PC-9 (cell line): ENCODE measurements at regions of chr1 and their contacts with region 1.

Region 1: GRCh38 chr1:42165511-42166163 is 1.1 kb upstream of the GUCA2A start:
- DNase-seq: peak; percentile 97 to 100
- H3K4me3 ChIP-seq: no peak overlapping the region
- H3K27ac ChIP-seq: peak overlapping the region; percentile 70
- H3K4me1 ChIP-seq: peaks cover 59% of the 10 kb centered on the region
- H3K27me3 ChIP-seq: no peaks in the 10 kb centered on the region
- CTCF ChIP-seq: no peak

Region 2: GRCh38 chr1:41423511-41424221 is 742.0 kb before region 1 on chr1:
- CTCF ChIA-PET with region 1: no interaction called
- POLR2A ChIA-PET with region 1: interaction called, 13 read pairs
- intact Hi-C with region 1: no loop called
- DNase-seq: peak; percentile 45 to 70
- H3K4me3 ChIP-seq: peak overlapping the region; percentile 43; the same call in 1 of the 2 replicates
- H3K27ac ChIP-seq: no peak overlapping the region
- H3K4me1 ChIP-seq: peaks cover 24% of the 10 kb centered on the region
- H3K27me3 ChIP-seq: no peaks in the 10 kb centered on the region
- CTCF ChIP-seq: peak; percentile 55; the same call in 1 of the 2 replicates

Region 3: GRCh38 chr1:41626616-41627375 is 538.8 kb before region 1 on chr1:
- CTCF ChIA-PET with region 1: no interaction called
- POLR2A ChIA-PET with region 1: interaction called, 45 read pairs
- intact Hi-C with region 1: no loop called
- DNase-seq: peak; percentile 89 to 90
- H3K4me3 ChIP-seq: no peak overlapping the region
- H3K27ac ChIP-seq: no peak overlapping the region
- H3K4me1 ChIP-seq: peaks cover 26% of the 10 kb centered on the region
- H3K27me3 ChIP-seq: no peaks in the 10 kb centered on the region
- CTCF ChIP-seq: no peak

Region 4: DNA sequence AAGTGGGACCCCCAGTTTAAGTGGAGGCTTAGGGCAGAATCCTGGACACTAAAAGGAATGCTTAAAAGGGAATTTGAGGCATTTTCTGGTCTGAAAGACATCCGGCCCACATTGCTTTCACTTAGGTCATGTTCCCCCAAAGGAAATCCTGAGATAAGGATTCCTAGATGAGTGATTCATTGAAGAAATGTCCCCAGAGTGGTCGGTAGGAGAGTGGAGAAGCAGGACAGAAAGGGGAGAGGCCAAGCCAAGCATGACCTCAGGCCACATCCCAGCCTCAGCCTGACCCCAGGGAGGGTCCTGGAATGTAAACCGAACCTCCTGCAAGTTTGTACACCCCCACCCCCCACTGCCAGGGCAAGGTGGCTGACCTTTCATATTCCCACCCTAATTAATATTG is 263.5 kb before region 1 on chr1:
- CTCF ChIA-PET with region 1: interaction called, 3 read pairs
- POLR2A ChIA-PET with region 1: no interaction called
- intact Hi-C with region 1: loop called (anchors 2 kb)
- DNase-seq: peak; percentile 87 to 91
- H3K4me3 ChIP-seq: peak overlapping the region; percentile 52; the same call in 1 of the 2 replicates
- H3K27ac ChIP-seq: peak overlapping the region; percentile 95
- H3K4me1 ChIP-seq: peaks cover 56% of the 10 kb centered on the region
- H3K27me3 ChIP-seq: no peaks in the 10 kb centered on the region
- CTCF ChIP-seq: no peak

Region 5: DNA sequence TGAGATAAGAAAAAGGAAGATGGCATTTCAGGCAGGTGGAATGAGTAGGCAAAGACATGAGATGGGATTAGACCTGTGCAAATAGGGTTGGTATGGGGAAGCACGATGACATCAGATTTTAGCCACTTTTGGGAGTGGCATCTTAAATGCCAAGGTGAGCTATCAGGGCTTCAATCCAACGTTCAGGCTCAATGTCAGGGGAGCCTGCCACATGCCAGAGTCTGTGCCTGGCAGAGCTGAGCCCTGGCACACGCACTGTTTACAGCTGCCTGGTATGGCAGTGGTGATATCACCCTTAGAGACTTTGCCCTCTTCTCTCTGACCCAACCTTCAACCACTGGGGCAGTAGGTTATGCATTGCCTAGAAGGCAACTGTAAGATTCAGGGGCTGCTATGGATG is 13.5 kb before region 1 on chr1:
- CTCF ChIA-PET with region 1: interaction called, 4 read pairs
- POLR2A ChIA-PET with region 1: interaction called, 7 read pairs
- intact Hi-C with region 1: loop called (anchors 1 kb)
- DNase-seq: peak; percentile 81 to 92
- H3K4me3 ChIP-seq: no peak overlapping the region
- H3K27ac ChIP-seq: no peak overlapping the region
- H3K4me1 ChIP-seq: peaks cover 34% of the 10 kb centered on the region
- H3K27me3 ChIP-seq: no peaks in the 10 kb centered on the region
- CTCF ChIP-seq: no peak